CD4-positive, alpha-beta memory T cell (primary cell): ENCODE measurements at regions of chr1 and their contacts with region 1.

Region 1: GRCh38 chr1:198520524-198521254 is 19.8 kb downstream of the ATP6V1G3 start:
- DNase-seq: peak in 4 of 5 donors; percentile 18 to 44 (median 25)
- H3K4me3 ChIP-seq: peak overlapping the region; percentile 19 to 46
- H3K4me3 Mint-ChIP-seq: peak overlapping the region; percentile 77 to 90 (median 80)
- H3K27ac ChIP-seq: peak overlapping the region; percentile 57
- H3K27ac Mint-ChIP-seq: peak overlapping the region; percentile 81 to 94 (median 91)
- H3K4me1 ChIP-seq: peaks cover 82% of the 10 kb centered on the region
- H3K4me1 Mint-ChIP-seq: peaks cover 57 to 84% (median 64%) of the 10 kb centered on the region in 4 donors
- H3K27me3 ChIP-seq: no peaks in the 10 kb centered on the region
- H3K27me3 Mint-ChIP-seq: no peaks in the 10 kb centered on the region

Region 2: DNA sequence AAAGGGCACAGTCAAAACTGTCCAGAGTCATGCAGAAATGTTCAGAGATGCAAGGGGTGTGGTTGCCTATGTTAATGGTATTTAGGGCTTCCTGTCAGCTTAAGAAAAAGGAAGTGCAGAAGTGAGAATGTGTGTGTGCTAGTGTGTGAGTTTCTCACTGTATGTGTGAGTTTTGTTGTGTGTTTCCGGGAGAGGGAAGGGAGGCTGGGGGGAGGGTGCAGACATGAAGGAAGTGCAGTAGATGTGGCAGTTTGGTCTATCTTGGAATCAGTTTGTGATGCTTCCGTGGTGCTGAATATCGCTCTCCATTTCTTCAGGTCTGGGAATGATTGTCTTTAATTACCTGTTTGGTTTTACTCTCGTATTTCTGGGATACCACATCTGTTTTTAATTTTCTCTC is 36.3 kb after region 1 on chr1:
- CTCF ChIA-PET with region 1: interaction called, 3 read pairs
- POLR2A ChIA-PET with region 1: interaction called, 10 read pairs
- intact Hi-C with region 1: loop called (anchors 5 kb)
- DNase-seq: peak; percentile 80 to 85 (median 83)
- H3K4me3 ChIP-seq: peak overlapping the region in 1 of 2 donors; percentile 30
- H3K4me3 Mint-ChIP-seq: peak overlapping the region; percentile 61 to 84 (median 74)
- H3K27ac ChIP-seq: no peak overlapping the region
- H3K27ac Mint-ChIP-seq: peak overlapping the region; percentile 9 to 80 (median 47)
- H3K4me1 ChIP-seq: peaks cover 80% of the 10 kb centered on the region
- H3K4me1 Mint-ChIP-seq: peaks cover 57 to 90% (median 71%) of the 10 kb centered on the region in 4 donors
- H3K27me3 ChIP-seq: no peaks in the 10 kb centered on the region
- H3K27me3 Mint-ChIP-seq: no peaks in the 10 kb centered on the region

Region 3: DNA sequence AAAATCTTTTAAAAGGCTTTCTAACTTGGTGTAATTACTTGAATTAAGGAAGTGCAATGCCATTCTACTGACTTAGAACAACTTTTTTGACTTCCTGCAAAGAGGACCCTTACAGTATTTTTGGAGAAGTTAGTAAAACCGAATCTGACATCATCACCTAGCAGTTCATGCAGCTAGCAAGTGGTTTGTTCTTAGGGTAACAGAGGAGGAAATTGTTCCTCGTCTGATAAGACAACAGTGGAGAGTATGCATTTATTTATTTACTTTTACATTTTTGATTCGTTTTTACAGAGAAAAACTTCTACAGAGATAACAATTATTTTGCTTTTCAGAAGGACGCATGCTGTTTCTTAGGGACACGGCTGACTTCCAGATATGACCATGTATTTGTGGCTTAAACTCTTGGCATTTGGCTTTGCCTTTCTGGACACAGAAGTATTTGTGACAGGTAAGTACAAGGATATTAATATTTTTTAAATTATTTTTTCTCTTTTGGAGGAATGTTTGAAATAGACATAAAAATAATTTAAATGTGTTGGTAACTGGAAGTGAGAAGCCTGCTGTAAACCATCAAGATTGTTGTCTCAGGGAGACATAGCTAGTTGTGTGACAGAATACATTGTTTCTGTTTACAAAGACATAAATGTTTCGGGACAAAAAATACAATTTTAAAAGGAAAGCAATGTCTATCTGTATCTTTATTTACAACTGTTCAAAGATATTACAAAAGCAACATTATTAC is 118.4 kb after region 1 on chr1 and contains the start of gene PTPRC:
- CTCF ChIA-PET with region 1: interaction called, 7 read pairs
- POLR2A ChIA-PET with region 1: interaction called, 36 read pairs
- intact Hi-C with region 1: loop called (anchors 1 kb)
- DNase-seq: peak in 4 of 5 donors; percentile 50 to 67 (median 60)
- H3K4me3 ChIP-seq: peak within 1 kb of the TSS; percentile 61 to 78
- H3K4me3 Mint-ChIP-seq: peak within 1 kb of the TSS; percentile 82 to 99 (median 94)
- H3K27ac ChIP-seq: peak within 1 kb of the TSS; percentile 83
- H3K27ac Mint-ChIP-seq: peak within 1 kb of the TSS; percentile 86 to 98 (median 95)
- H3K4me1 ChIP-seq: peaks cover 60% of the 10 kb centered on the region
- H3K4me1 Mint-ChIP-seq: peaks cover 34 to 46% (median 39%) of the 10 kb centered on the region in 4 donors
- H3K27me3 ChIP-seq: no peaks in the 10 kb centered on the region
- H3K27me3 Mint-ChIP-seq: no peaks in the 10 kb centered on the region
- total RNA-seq, gene PTPRC: 974 to 987 TPM

Region 4: DNA sequence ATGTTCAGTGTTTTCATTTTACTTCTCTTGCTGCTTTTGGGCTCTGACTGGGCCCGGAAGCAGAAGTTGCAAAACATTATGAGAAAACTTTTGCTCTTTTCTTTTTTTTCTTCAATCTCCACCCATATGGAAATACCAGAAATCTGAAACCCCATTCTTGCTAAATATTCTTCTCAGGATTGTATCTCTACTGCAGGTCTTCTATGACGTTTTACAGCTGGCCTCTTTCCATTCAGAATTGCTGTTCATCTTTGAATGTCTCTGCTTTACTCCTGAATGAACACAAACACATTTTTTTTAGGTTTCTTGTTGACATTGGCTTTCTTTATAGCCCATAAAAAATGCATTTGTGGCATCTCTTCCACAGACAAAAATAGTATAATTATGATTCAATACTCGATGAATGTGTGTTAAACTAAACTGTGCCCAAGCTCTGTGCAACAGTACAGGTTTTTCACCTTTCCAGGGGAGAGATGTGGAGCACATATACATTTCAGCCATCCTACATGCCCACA is 136.9 kb after region 1 on chr1:
- CTCF ChIA-PET with region 1: interaction called, 6 read pairs
- POLR2A ChIA-PET with region 1: interaction called, 12 read pairs
- intact Hi-C with region 1: loop called (anchors 1 kb)
- DNase-seq: peak; percentile 58 to 73 (median 65)
- H3K4me3 ChIP-seq: peak overlapping the region; percentile 22 to 33
- H3K4me3 Mint-ChIP-seq: peak overlapping the region; percentile 59 to 87 (median 79)
- H3K27ac ChIP-seq: peak overlapping the region; percentile 93
- H3K27ac Mint-ChIP-seq: peak overlapping the region; percentile 96 to 99 (median 98)
- H3K4me1 ChIP-seq: peaks cover 91% of the 10 kb centered on the region
- H3K4me1 Mint-ChIP-seq: peaks cover 43 to 65% (median 58%) of the 10 kb centered on the region in 4 donors
- H3K27me3 ChIP-seq: no peaks in the 10 kb centered on the region
- H3K27me3 Mint-ChIP-seq: no peaks in the 10 kb centered on the region

Region 5: DNA sequence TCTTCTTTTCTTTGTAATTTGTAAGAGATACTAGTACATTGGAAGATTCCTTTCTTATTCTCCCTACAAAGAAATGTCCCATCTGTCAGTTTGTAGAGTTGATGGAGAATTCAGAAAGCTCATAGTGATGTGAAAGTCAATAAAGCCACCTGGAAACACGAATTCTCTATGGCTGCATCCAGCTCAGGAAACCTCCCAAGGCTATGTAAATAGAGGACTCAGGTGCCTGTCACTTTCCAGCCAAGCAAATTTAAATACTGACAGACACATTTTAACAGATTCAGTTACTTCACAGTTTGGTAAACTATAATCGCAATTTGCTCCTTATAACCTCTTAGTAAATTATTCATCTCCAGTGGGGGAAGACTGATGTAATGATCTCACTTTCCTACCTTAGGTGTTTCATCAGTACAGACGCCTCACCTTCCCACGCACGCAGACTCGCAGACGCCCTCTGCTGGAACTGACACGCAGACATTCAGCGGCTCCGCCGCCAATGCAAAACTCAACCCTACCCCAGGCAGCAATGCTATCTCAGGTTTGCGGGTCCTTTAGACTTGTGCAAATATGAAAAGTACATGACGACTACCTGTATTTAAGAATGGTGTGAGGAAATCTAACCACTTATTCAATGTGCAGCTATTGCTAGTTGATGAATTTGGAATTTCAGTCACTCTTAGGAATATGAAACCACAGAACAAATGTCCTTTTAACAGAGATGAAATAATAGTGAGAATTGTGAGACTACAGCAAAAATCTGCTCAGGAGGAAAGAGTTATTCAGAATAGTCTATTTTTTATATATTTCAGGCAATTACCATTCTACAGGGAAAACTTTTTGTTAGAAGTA is 178.7 kb after region 1 on chr1:
- CTCF ChIA-PET with region 1: interaction called, 5 read pairs
- POLR2A ChIA-PET with region 1: interaction called, 14 read pairs
- intact Hi-C with region 1: loop called (anchors 1 kb)
- DNase-seq: peak; percentile 60 to 72 (median 66)
- H3K4me3 ChIP-seq: no peak overlapping the region
- H3K4me3 Mint-ChIP-seq: peak overlapping the region in 6 of 8 donors; percentile 26 to 76 (median 52)
- H3K27ac ChIP-seq: peak overlapping the region; percentile 33
- H3K27ac Mint-ChIP-seq: peak overlapping the region; percentile 85 to 91 (median 87)
- H3K4me1 ChIP-seq: peaks cover 87% of the 10 kb centered on the region
- H3K4me1 Mint-ChIP-seq: peaks cover 59 to 82% (median 70%) of the 10 kb centered on the region in 4 donors
- H3K27me3 ChIP-seq: no peaks in the 10 kb centered on the region
- H3K27me3 Mint-ChIP-seq: no peaks in the 10 kb centered on the region